ENCODE measurements at regions of chr22 and their contacts with region 1.

Region 1: GRCh38 chr22:20016734-20017621 is at the start of gene ARVCF:
- DNase-seq: peak; percentile 57 to 93
- H3K4me3 ChIP-seq: peak within 1 kb of the TSS; percentile 84 to 91
- H3K27ac ChIP-seq: peak within 1 kb of the TSS in 1 of 2 donors; percentile 21
- H3K4me1 ChIP-seq: peaks cover 6 to 21% of the 10 kb centered on the region in 2 donors
- H3K27me3 ChIP-seq: no peaks in the 10 kb centered on the region
- CTCF ChIP-seq: peak in 2 of 3 experiments; percentile 30 to 48
- total RNA-seq, gene ARVCF: 252 TPM

Region 2: GRCh38 chr22:19970479-19971275 is 46.3 kb before region 1 on chr22:
- intact Hi-C with region 1: loop called (anchors 1 kb)
- DNase-seq: peak in 1 of 2 donors; percentile 82
- H3K4me3 ChIP-seq: no peak overlapping the region
- H3K27ac ChIP-seq: peak overlapping the region; percentile 26 to 69
- H3K4me1 ChIP-seq: peaks cover 0 to 10% of the 10 kb centered on the region in 2 donors
- H3K27me3 ChIP-seq: no peaks in the 10 kb centered on the region
- CTCF ChIP-seq: peak; percentile 75 to 98 (median 96)

Region 3: GRCh38 chr22:19995626-19996335 is 21.2 kb before region 1 on chr22:
- intact Hi-C with region 1: loop called (anchors 2 kb)
- DNase-seq: peak in 1 of 2 donors; percentile 94
- H3K4me3 ChIP-seq: peak overlapping the region in 1 of 2 donors; percentile 12
- H3K27ac ChIP-seq: peak overlapping the region; percentile 88 to 95
- H3K4me1 ChIP-seq: peaks cover 36 to 75% of the 10 kb centered on the region in 2 donors
- H3K27me3 ChIP-seq: no peaks in the 10 kb centered on the region
- CTCF ChIP-seq: no peak

Region 4: GRCh38 chr22:20071524-20071972 is 54.6 kb after region 1 on chr22:
- intact Hi-C with region 1: no loop called
- DNase-seq: no peak
- H3K4me3 ChIP-seq: no peak overlapping the region
- H3K27ac ChIP-seq: no peak overlapping the region
- H3K4me1 ChIP-seq: no peaks in the 10 kb centered on the region
- H3K27me3 ChIP-seq: no peaks in the 10 kb centered on the region
- CTCF ChIP-seq: no peak

Region 5: GRCh38 chr22:20116951-20117645 is 100.1 kb after region 1 on chr22 and contains the start of gene TRMT2A:
- intact Hi-C with region 1: loop called (anchors 2 kb)
- DNase-seq: peak; percentile 92 to 99
- H3K4me3 ChIP-seq: peak within 1 kb of the TSS; percentile 68 to 85
- H3K27ac ChIP-seq: peak within 1 kb of the TSS; percentile 83 to 85
- H3K4me1 ChIP-seq: peaks cover 6 to 18% of the 10 kb centered on the region in 2 donors
- H3K27me3 ChIP-seq: no peaks in the 10 kb centered on the region
- CTCF ChIP-seq: peak in 2 of 3 experiments; percentile 17 to 26
- total RNA-seq, gene TRMT2A: 161 TPM

Measured in ascending aorta (tissue), 2 donors.